ENCODE measurements at regions of chr12 and their contacts with region 1.

Region 1: DNA sequence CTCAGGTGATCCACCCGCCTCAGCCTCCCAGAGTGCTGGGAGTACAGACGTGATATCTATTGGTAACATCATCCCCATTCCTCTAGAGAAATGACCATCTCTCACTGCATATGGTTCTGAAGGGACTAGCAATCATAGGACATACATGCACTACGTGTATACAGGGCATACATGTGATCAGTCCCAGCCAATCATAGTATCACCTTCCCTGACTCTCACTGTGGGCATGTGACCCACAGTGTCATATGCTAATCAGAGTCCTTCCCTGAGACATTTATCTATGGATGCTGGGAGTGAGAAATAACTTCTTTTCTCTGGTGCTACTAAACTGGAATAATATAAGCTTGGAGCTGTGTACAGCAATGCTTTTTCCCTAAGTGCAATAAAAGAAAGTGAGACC is 12.1 kb upstream of the FBXW8 start:
- DNase-seq: no peak
- H3K27ac ChIP-seq: no peak overlapping the region
- CTCF ChIP-seq: no peak

Region 2: GRCh38 chr12:116813278-116814041 is 85.2 kb before region 1 on chr12:
- CTCF ChIA-PET with region 1: no interaction called
- POLR2A ChIA-PET with region 1: no interaction called
- DNase-seq: peak; percentile 93
- H3K27ac ChIP-seq: no peak overlapping the region
- CTCF ChIP-seq: no peak

Region 3: DNA sequence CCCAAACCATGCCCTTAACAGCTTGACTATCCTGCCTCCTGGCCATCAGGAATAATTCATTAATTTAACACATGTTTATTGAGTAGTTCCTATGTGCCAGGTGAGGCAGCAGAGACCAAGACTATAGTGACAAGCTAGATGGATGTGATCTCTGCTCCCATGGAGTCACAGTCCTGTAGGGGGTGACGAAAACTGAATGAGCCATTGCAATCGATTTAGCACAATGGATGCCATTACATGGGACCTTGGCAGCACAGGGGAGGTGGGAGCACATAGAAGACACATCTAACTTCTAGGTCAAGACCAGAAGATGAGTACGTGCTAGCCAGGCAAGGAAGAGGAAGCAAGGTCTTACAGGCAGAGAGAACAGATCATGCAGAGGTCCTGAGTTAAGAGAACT is 394.0 kb after region 1 on chr12:
- CTCF ChIA-PET with region 1: no interaction called
- POLR2A ChIA-PET with region 1: interaction called, 19 read pairs
- DNase-seq: no peak
- H3K27ac ChIP-seq: no peak overlapping the region
- CTCF ChIP-seq: no peak

Measured in RWPE1 (cell line).